ENCODE measurements at regions of chr16 and their contacts with region 1.

Region 1: DNA sequence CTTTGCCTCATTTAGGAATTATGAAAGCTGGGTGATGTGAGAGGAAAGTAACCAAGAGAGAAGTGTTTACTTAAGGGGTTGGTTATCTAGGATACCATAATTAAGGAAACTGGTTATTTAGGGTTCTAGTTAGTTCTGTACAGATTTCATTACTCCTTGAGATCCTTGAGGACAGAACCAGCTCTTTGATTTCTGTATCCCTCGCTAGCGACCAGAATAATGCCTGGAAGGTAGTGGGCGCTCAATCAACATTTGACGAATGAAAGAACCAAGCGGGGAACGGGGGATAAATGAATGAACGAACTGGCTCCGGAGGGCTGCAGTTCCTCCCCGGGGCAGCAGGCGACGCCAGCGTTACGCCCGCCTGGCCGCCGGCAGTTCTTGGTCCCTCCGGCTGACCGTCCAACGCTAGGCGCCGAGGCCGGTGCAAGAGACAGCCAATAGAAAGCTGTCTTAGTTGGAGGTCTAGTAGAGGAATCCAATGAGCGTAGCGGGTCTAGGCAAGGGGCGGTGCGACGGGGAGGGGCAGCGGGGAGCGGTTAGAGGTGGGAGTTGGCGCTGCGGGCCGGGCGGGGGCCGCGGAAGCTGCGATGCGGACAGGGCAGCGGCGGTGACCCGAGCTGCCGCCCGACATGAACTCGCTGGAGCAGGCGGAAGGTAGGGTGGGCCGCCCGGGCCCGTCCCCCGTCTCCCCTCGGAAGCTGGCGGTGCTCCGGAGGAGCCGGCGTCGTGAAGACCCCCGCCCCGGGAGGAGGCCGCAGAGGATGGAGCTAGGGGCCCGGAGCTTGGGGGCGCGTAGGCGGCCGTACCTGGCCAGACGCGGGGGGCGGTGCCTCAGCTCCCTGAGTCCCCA is at the start of gene CNEP1R1:
- DNase-seq: peak; percentile 93
- H3K4me3 Mint-ChIP-seq: peak within 1 kb of the TSS; percentile 94
- H3K27ac Mint-ChIP-seq: peak within 1 kb of the TSS; percentile 95
- H3K4me1 Mint-ChIP-seq: peaks cover 23% of the 10 kb centered on the region
- H3K27me3 Mint-ChIP-seq: no peaks in the 10 kb centered on the region
- total RNA-seq, gene CNEP1R1: 22.7 to 29.1 TPM

Region 2: DNA sequence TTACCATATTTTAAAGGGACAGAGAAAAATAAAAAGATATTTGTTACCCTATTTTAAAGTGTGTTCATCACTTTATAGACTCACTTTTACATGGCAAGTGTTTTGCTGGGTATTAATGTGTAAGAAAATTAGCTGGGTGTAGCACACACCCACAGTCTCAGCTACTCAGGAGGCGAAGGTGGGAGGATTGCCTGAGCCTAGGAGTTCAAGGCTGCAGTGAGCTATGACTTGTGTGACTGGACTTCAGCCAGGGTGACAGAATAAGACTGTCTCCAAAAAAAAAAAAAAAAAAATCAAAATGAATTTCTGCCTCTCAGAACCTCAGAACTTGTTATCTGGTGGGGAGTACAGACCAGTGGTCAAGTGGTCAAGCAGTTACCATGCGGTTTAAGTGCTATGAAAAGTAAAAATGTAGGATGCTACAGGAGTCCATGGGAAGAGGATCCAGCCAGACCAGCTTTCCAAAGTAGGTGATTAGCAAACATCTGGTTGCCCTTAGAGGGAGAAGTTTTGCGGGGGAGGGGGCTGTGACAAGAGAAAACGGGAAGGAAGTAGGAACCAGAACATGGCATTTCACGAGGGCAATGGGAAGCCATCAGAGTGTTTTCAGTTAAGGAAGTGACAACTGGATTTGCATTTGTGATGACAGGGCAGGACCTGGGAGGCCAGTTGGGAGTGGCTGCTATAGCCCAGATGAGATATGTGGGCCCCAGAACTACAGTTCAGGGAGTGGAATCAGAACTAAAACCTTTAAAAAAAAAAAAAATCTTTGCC is 14.0 kb after region 1 on chr16:
- CTCF ChIA-PET with region 1: interaction called, 21 read pairs
- POLR2A ChIA-PET with region 1: no interaction called
- DNase-seq: no peak
- H3K4me3 Mint-ChIP-seq: no peak overlapping the region
- H3K27ac Mint-ChIP-seq: peak overlapping the region; percentile 47
- H3K4me1 Mint-ChIP-seq: peaks cover 17% of the 10 kb centered on the region
- H3K27me3 Mint-ChIP-seq: peaks cover 13% of the 10 kb centered on the region

Region 3: DNA sequence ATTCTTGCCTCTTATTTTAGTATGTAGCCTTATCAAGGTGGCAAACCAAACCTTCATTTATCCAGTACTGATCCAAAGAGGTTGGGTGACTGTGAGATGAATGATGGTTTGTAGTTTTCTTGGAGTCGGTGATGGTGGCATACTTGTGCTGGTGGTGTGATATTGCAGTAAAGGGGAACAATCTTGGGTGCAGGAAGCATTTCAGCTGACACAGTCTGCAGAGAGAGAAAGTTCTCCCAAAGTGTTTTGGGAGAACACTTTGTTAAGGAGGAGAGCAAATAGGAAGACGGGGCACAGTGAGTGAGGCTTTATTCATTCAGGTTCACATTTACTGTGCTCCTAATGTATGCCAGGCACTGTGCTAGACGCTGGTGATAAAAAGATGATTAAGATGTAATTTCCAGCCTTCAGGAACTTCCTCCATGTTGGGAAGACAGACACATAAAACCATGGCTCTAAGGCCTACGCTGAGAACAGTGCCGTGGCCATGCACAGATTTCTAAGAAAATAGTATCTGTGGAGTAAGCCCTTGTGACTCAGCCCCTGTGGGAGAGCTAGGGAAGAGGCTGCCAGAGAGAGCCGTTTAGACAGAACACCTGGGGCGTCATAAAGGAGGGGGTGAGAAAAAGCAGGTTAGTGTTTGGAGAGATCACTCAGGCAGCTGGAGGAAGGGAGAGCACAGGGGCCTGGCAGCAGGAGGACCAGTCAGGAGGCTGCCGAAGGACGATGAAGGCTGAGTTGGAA is 54.7 kb after region 1 on chr16:
- CTCF ChIA-PET with region 1: no interaction called
- POLR2A ChIA-PET with region 1: no interaction called
- DNase-seq: no peak
- H3K4me3 Mint-ChIP-seq: no peak overlapping the region
- H3K27ac Mint-ChIP-seq: no peak overlapping the region
- H3K4me1 Mint-ChIP-seq: peaks cover 16% of the 10 kb centered on the region
- H3K27me3 Mint-ChIP-seq: no peaks in the 10 kb centered on the region

Region 4: GRCh38 chr16:50210266-50211038 is 185.5 kb after region 1 on chr16:
- CTCF ChIA-PET with region 1: interaction called, 24 read pairs
- POLR2A ChIA-PET with region 1: interaction called, 4 read pairs
- DNase-seq: peak; percentile 81
- H3K4me3 Mint-ChIP-seq: no peak overlapping the region
- H3K27ac Mint-ChIP-seq: peak overlapping the region; percentile 62
- H3K4me1 Mint-ChIP-seq: peaks cover 38% of the 10 kb centered on the region
- H3K27me3 Mint-ChIP-seq: no peaks in the 10 kb centered on the region

Region 5: DNA sequence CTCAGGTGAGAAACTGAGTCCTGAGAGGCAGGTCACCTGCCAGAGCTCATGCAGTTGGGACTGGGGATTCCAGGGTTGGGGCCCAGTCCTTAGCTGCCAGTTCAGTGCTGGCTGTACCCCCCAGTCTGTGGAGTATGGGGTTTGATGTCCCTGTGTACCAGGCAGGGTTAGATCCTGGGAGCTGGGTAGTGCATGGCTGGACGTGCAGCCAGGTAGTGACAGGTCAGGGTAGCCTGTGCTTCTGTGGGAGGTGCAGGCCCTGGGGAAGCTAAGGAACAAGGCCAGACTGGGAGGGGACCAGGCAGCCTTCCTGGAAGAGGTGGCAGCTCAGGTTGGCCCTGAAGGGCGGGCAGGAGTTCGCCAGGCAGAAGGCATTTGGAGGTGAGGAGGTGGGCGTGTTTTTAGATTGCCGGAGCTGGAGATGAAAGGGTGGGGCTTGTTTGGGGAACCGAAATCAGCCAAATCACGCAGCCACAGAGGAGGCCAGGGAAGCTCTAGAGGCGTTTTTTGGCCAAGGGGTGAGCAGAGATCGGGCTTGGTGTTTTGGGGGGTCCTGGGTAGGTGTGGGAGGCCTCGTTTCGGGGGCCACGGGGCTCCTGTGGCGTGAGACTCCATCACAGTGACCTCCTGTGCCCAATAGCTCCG is 248.9 kb after region 1 on chr16:
- CTCF ChIA-PET with region 1: interaction called, 13 read pairs
- POLR2A ChIA-PET with region 1: no interaction called
- DNase-seq: peak; percentile 62
- H3K4me3 Mint-ChIP-seq: peak overlapping the region; percentile 89
- H3K27ac Mint-ChIP-seq: peak overlapping the region; percentile 97
- H3K4me1 Mint-ChIP-seq: peaks cover 97% of the 10 kb centered on the region
- H3K27me3 Mint-ChIP-seq: no peaks in the 10 kb centered on the region

Region 6: DNA sequence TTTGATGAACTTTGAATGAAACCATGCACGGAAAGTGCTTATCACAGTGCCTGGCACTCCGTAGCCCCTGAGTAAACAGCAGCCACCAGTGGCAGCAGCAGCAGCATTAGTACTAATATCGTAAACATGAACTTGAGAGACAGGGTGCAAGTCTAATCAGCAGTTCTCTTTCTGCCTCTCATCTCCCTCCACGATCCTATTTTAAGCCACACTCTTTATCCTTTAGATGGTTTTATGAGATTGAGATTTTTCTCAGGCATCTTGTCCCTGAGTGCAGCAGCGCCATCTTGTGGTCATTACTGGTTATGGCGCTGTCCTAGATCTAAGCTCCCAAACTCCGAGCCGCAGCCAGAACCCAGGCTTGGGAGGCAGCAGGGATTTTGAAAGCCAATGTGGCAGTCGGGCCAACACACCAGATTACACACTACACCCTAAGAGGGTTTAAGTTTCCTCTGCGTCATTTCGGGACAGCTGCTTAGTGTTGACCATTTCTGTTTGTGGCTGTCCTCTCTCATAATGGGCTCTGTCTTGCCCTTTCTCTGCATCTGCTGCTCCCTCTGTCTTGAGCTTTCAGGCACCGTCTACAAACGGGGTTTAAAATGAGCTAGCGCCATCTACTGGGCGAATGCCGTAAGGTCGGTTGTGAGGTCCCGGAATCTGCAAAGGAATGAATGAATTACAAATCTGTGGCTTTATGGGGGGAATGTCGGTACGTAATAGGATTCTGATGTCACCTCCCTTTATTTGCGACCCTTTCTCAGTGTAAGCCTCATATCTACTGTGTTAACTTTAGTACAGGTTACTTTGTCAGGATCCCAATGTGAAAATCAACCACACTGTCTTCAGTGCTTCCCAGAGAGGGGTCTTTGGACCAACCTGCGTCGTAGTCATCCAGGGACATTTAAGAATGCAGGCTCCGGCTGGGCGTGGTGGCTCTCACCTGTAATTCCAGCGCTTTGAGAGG is 781.5 kb after region 1 on chr16:
- CTCF ChIA-PET with region 1: interaction called, 16 read pairs
- POLR2A ChIA-PET with region 1: no interaction called
- DNase-seq: peak; percentile 90
- H3K4me3 Mint-ChIP-seq: peak overlapping the region; percentile 59
- H3K27ac Mint-ChIP-seq: peak overlapping the region; percentile 71
- H3K4me1 Mint-ChIP-seq: peaks cover 17% of the 10 kb centered on the region
- H3K27me3 Mint-ChIP-seq: no peaks in the 10 kb centered on the region

Measured in activated CD4-positive, alpha-beta T cell treated with anti-CD3 and anti-CD28 coated beads, Interleukin-2, amount 10 ng/mL, durations not matched to agents 7 days and 5 days (primary cell).